SK-N-SH (cell line): ENCODE measurements at regions of chr6 and their contacts with region 1.

Region 1: GRCh38 chr6:85642774-85643536 is at the start of gene SYNCRIP:
- DNase-seq: peak; percentile 92
- H3K4me3 ChIP-seq: peak within 1 kb of the TSS; percentile 95 to 97
- H3K27ac ChIP-seq: peak within 1 kb of the TSS; percentile 99
- H3K4me1 ChIP-seq: peaks cover 10 to 12% of the 10 kb centered on the region in 2 experiments; a peak in 3 of 4 replicates
- H3K27me3 ChIP-seq: no peaks in the 10 kb centered on the region
- CTCF ChIP-seq: no peak
- EP300 ChIP-seq: 0 out of 4 replicates have a peak, but pooled peaks of 1 of the 2 experiments have one; percentile 3
- RAD21 ChIP-seq: no peak
- polyA plus RNA-seq, gene SYNCRIP: 15.9 and 17.8 TPM in 2 replicates

Region 2: GRCh38 chr6:85314586-85314985 is 328.4 kb before region 1 on chr6:
- CTCF ChIA-PET with region 1: no interaction called
- POLR2A ChIA-PET with region 1: no interaction called
- DNase-seq: no peak
- H3K4me3 ChIP-seq: no peak overlapping the region
- H3K27ac ChIP-seq: no peak overlapping the region
- H3K4me1 ChIP-seq: no peaks in the 10 kb centered on the region
- H3K27me3 ChIP-seq: no peaks in the 10 kb centered on the region
- CTCF ChIP-seq: no peak
- EP300 ChIP-seq: no peak
- RAD21 ChIP-seq: no peak

Region 3: DNA sequence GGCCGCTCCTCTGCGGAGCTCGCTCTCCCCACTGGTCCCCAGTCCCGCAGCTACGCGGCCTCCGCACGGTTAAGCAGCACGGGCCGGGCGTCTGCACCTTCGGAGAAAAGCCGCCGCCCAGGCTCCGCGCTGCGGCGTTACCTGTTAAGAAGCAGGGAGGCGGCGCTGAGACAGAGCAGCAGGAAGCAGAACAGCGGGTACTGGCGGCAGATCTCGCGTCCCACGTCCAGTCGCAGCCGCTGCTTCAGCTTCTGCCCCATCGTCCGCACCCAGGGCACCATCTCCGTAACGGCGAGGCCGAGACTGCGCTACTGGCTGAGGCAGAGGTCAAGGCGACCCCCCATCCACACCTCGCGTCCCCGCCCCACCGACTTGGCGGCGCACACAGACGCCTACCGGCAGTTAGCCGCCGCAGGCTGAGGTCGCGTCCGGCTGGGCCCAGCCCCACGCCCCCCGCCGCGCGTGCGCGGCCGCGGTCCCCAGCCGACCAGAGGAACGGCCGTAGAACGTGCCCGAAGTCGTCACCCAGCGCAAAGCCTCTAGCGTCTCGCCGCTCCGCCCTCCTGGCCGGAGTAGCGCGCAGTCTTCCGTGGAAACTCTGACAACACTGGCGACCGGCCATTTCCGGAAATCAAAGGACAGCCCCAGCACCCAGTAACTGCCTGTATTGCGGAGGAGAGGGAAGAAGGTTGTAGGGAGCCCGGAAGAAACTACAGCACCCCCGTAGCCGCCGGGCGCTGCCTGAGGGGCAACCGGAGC is 49.3 kb before region 1 on chr6 and contains the start of gene SNX14:
- CTCF ChIA-PET with region 1: interaction called, 3 read pairs
- POLR2A ChIA-PET with region 1: interaction called, 28 read pairs
- DNase-seq: peak; percentile 94
- H3K4me3 ChIP-seq: peak within 1 kb of the TSS; percentile 88 to 92
- H3K27ac ChIP-seq: peak within 1 kb of the TSS; percentile 93 to 96
- H3K4me1 ChIP-seq: peaks cover 0 to 6% of the 10 kb centered on the region in 2 experiments; a peak in 2 of 4 replicates
- H3K27me3 ChIP-seq: no peaks in the 10 kb centered on the region
- CTCF ChIP-seq: peak; percentile 19; the same call in 1 of the 2 replicates
- EP300 ChIP-seq: no peak
- RAD21 ChIP-seq: no peak
- polyA plus RNA-seq, gene SNX14: 40.4 and 53.9 TPM in 2 replicates

Region 4: GRCh38 chr6:85632164-85632942 is 10.6 kb before region 1 on chr6:
- CTCF ChIA-PET with region 1: no interaction called
- POLR2A ChIA-PET with region 1: interaction called, 12 read pairs
- DNase-seq: no peak
- H3K4me3 ChIP-seq: no peak overlapping the region
- H3K27ac ChIP-seq: no peak overlapping the region
- H3K4me1 ChIP-seq: no peaks in the 10 kb centered on the region
- H3K27me3 ChIP-seq: no peaks in the 10 kb centered on the region
- CTCF ChIP-seq: no peak
- EP300 ChIP-seq: no peak
- RAD21 ChIP-seq: no peak

Region 5: GRCh38 chr6:85660181-85660611 is 17.2 kb after region 1 on chr6:
- CTCF ChIA-PET with region 1: interaction called, 3 read pairs
- POLR2A ChIA-PET with region 1: interaction called, 11 read pairs
- DNase-seq: peak; percentile 64
- H3K4me3 ChIP-seq: peak overlapping the region; percentile 25 to 46; a peak in 3 of 4 replicates
- H3K27ac ChIP-seq: peak overlapping the region; percentile 78 to 86
- H3K4me1 ChIP-seq: peaks cover 4 to 8% of the 10 kb centered on the region in 2 experiments; a peak in 2 of 4 replicates
- H3K27me3 ChIP-seq: no peaks in the 10 kb centered on the region
- CTCF ChIP-seq: peak; percentile 39
- EP300 ChIP-seq: no peak
- RAD21 ChIP-seq: peak; percentile 45